CD8-positive, alpha-beta T cell (primary cell): ENCODE measurements at regions of chr22 and their contacts with region 1.

Region 1: GRCh38 chr22:50250555-50251476 is at the start of gene HDAC10:
- DNase-seq: peak; percentile 38 to 90 (median 77)
- ATAC-seq: peak; percentile 72
- H3K4me3 ChIP-seq: peak within 1 kb of the TSS; percentile 77 to 89
- H3K4me3 Mint-ChIP-seq: peak within 1 kb of the TSS; percentile 81
- H3K27ac ChIP-seq: peak within 1 kb of the TSS; percentile 58 to 67
- H3K27ac Mint-ChIP-seq: no peak within 1 kb of the TSS
- H3K4me1 ChIP-seq: peaks cover 36% of the 10 kb centered on the region
- H3K4me1 Mint-ChIP-seq: peaks cover 22% of the 10 kb centered on the region
- H3K27me3 ChIP-seq: no peaks in the 10 kb centered on the region
- H3K27me3 Mint-ChIP-seq: no peaks in the 10 kb centered on the region
- CTCF ChIP-seq: no peak
- total RNA-seq, gene HDAC10: 81.8 to 82.6 TPM

Region 2: DNA sequence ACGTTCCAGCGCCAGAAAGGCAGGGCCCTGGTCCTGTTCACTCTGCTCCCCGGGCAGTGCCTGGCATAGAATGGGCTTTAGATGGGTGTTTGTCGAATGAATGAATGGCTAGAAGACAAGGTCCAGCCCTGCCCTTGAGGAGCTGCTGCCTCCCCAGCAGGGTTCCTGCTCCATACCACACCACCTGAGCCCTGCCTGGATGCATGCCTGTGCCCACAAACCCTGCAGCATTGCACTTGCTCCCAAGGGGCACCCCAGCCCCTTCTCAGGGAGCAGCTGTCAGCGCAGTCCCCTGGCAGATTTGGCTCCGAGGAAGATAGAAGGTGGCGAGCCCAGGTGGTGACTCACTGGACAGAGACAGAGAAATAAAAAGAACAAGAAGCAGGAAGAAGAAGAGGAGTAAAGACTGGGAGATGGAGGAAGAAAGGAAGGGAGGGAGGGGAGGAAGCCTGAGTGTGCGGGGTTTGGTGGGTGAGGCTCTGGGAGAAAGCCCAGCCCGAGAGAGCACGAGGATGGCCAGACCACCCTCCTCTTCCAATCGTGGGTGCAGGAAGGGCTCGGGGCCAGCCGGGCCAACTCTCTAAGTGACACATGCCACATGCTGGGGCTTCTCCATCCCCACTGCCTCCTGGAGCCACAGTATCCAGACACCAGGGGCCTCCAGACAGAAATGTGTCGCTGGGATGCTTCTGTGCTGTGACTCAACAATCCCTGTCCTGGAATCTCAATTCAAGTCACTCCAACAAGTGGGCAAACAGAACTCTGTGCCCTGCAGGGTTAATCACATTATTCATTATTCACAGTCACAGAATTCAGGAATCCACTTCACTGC is 1897.5 kb before region 1 on chr22:
- CTCF ChIA-PET with region 1: no interaction called
- POLR2A ChIA-PET with region 1: no interaction called
- intact Hi-C with region 1: no loop called
- DNase-seq: no peak
- ATAC-seq: no peak
- H3K4me3 ChIP-seq: no peak overlapping the region
- H3K4me3 Mint-ChIP-seq: no peak overlapping the region
- H3K27ac ChIP-seq: no peak overlapping the region
- H3K27ac Mint-ChIP-seq: no peak overlapping the region
- H3K4me1 ChIP-seq: no peaks in the 10 kb centered on the region
- H3K4me1 Mint-ChIP-seq: no peaks in the 10 kb centered on the region
- H3K27me3 ChIP-seq: peaks cover 0 to 3% of the 10 kb centered on the region in 2 experiments
- H3K27me3 Mint-ChIP-seq: peaks cover 3% of the 10 kb centered on the region
- CTCF ChIP-seq: no peak

Region 3: GRCh38 chr22:50260801-50261614 is 10.2 kb after region 1 on chr22:
- CTCF ChIA-PET with region 1: interaction called, 5 read pairs
- POLR2A ChIA-PET with region 1: no interaction called
- intact Hi-C with region 1: loop called in 1 of 2 experiments (anchors 1 kb)
- DNase-seq: no peak
- ATAC-seq: peak; percentile 47
- H3K4me3 ChIP-seq: no peak overlapping the region
- H3K4me3 Mint-ChIP-seq: no peak overlapping the region
- H3K27ac ChIP-seq: no peak overlapping the region
- H3K27ac Mint-ChIP-seq: no peak overlapping the region
- H3K4me1 ChIP-seq: peaks cover 6% of the 10 kb centered on the region
- H3K4me1 Mint-ChIP-seq: peaks cover 9% of the 10 kb centered on the region
- H3K27me3 ChIP-seq: peaks cover 9 to 13% of the 10 kb centered on the region in 2 experiments
- H3K27me3 Mint-ChIP-seq: peaks cover 20% of the 10 kb centered on the region
- CTCF ChIP-seq: no peak

Region 4: DNA sequence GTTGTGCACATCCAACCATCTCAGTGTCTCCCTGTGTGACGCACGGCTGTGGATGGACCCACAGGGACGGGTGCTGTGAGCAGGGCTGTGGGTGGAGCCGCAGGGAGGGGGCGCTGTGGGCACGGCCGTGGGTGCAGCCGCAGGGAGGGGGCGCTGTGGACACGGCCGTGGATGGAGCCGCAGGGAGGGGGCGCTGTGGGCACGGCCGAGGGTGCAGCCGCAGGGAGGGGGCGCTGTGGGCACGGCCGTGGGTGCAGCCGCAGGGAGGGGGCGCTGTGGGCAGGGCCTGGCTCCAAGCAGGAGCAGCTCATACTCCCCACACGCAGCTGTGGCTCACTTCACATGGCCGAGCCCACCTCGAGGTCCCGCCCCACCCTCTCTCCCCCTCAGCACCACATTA is 25.3 kb after region 1 on chr22:
- CTCF ChIA-PET with region 1: interaction called, 11 read pairs
- POLR2A ChIA-PET with region 1: no interaction called
- intact Hi-C with region 1: loop called in 1 of 2 experiments (anchors 1 kb)
- DNase-seq: peak in 4 of 9 experiments; percentile 41 to 81 (median 70)
- ATAC-seq: peak; percentile 74
- H3K4me3 ChIP-seq: no peak overlapping the region
- H3K4me3 Mint-ChIP-seq: no peak overlapping the region
- H3K27ac ChIP-seq: no peak overlapping the region
- H3K27ac Mint-ChIP-seq: no peak overlapping the region
- H3K4me1 ChIP-seq: peaks cover 10% of the 10 kb centered on the region
- H3K4me1 Mint-ChIP-seq: peaks cover 3% of the 10 kb centered on the region
- H3K27me3 ChIP-seq: no peaks in the 10 kb centered on the region
- H3K27me3 Mint-ChIP-seq: peaks cover 3% of the 10 kb centered on the region
- CTCF ChIP-seq: peak; percentile 41

Region 5: DNA sequence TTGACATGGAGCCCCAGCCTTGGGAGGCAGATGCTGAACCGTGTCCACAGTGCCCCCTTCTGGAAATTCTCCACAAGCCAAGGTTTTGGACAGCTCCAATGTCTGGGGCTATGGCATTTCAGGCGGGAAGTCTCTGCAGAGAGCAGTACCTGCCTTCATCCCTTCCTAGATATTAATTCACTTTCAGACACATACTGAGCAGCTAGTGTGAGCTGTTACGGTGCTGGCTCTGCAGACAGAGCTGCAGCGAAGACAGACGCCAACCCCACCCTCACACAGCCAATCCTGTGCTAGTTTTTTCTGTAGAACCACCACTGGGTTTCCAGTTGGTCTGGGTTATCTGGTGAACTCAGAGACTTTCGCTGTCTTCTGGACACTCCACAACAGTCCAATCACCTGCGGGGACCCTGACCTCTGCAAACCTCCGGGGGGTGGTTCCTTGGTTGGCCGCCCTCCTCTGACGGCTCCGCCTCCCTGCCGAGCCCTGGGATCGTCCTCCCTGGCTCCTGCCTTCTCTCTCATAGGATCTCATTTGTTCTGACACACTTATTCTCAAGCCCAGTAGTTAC is 247.6 kb after region 1 on chr22:
- CTCF ChIA-PET with region 1: interaction called, 14 read pairs
- POLR2A ChIA-PET with region 1: interaction called, 3 read pairs
- intact Hi-C with region 1: loop called (anchors 1 kb)
- DNase-seq: peak; percentile 41 to 84 (median 76)
- ATAC-seq: peak; percentile 99
- H3K4me3 ChIP-seq: no peak overlapping the region
- H3K4me3 Mint-ChIP-seq: no peak overlapping the region
- H3K27ac ChIP-seq: no peak overlapping the region
- H3K27ac Mint-ChIP-seq: no peak overlapping the region
- H3K4me1 ChIP-seq: no peaks in the 10 kb centered on the region
- H3K4me1 Mint-ChIP-seq: no peaks in the 10 kb centered on the region
- H3K27me3 ChIP-seq: no peaks in the 10 kb centered on the region
- H3K27me3 Mint-ChIP-seq: no peaks in the 10 kb centered on the region
- CTCF ChIP-seq: peak; percentile 63